K562 (cell line): ENCODE measurements at regions of chr11 and their contacts with region 1.

Region 1: GRCh38 chr11:125923012-125923579 is 18.8 kb downstream of the DDX25 start:
- DNase-seq: peak; percentile 70 to 82 (median 72)
- ATAC-seq: peak; percentile 96
- H3K4me3 ChIP-seq: no peak overlapping the region
- H3K27ac ChIP-seq: no peak overlapping the region
- H3K4me1 ChIP-seq: no peaks in the 10 kb centered on the region
- H3K27me3 ChIP-seq: peaks cover 45 to 68% of the 10 kb centered on the region in 2 experiments
- CTCF ChIP-seq: peak; percentile 80 to 90 (median 81)
- EP300 ChIP-seq: no peak
- POLR2A ChIP-seq: no peak
- RAD21 ChIP-seq: peak; percentile 84 to 88

Region 2: GRCh38 chr11:126062679-126063506 is 139.8 kb after region 1 on chr11 and contains the start of gene CDON:
- CTCF ChIA-PET with region 1: no interaction called
- POLR2A ChIA-PET with region 1: interaction called, 3 read pairs
- in situ Hi-C with region 1: no loop called
- intact Hi-C with region 1: loop called (anchors 10 kb)
- DNase-seq: peak; percentile 92 to 99 (median 99)
- ATAC-seq: peak; percentile 99
- H3K4me3 ChIP-seq: peak within 1 kb of the TSS; percentile 43
- H3K27ac ChIP-seq: peak within 1 kb of the TSS; percentile 91
- H3K4me1 ChIP-seq: peaks cover 0 to 12% of the 10 kb centered on the region in 2 experiments; a peak in 2 of 5 replicates
- H3K27me3 ChIP-seq: peaks cover 8 to 21% of the 10 kb centered on the region in 2 experiments; a peak in 3 of 5 replicates
- CTCF ChIP-seq: 0 out of 6 replicates have a peak, but pooled peaks of 1 of the 3 experiments have one; percentile 22
- EP300 ChIP-seq: no peak
- POLR2A ChIP-seq: no peak
- RAD21 ChIP-seq: no peak
- polyA plus RNA-seq, gene CDON: 0.08 to 0.14 TPM